A549 (cell line): ENCODE measurements at regions of chr7 and their contacts with region 1.

Region 1: DNA sequence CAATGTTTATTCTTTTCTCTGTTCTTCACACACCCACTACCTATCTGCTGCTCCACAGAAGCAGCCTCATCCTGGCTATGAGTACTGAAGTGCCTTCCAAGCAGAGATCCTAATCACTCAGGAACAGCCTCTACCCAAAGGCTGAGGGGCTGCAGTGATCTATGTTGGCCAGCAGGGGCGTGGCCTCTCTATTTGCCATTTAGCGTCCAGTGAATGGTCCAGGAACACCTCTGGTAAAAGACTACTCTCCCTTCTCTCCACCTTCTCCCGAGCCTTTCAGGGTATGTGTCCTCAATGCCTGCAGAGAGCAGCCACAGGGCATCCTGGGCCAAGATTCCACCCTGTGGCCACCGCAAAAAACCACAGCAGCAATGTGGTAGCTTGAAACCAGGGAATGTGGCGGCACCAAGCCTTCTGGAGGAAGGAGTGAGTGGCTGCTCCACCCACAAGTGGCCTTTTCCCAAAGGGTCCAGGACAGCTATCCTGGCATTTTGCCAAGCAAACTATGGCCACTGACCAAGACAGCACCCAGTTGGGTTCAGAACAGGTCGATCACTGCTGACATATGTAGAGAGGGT is 70.9 kb downstream of the SYPL1 start:
- DNase-seq: peak; percentile 64 to 85
- ATAC-seq: peak; percentile 71 to 84
- H3K4me3 ChIP-seq: no peak overlapping the region
- H3K27ac ChIP-seq: no peak overlapping the region
- H3K4me1 ChIP-seq: 0 out of 3 replicates have a peak, but pooled peaks cover 2% of the 10 kb centered on the region
- CTCF ChIP-seq: peak; percentile 52
- EP300 ChIP-seq: no peak
- POLR2A ChIP-seq: no peak
- RAD21 ChIP-seq: peak in 1 of 2 experiments; percentile 30; a peak in 2 of 5 replicates

Region 2: GRCh38 chr7:105652359-105652993 is 388.8 kb before region 1 on chr7:
- CTCF ChIA-PET with region 1: interaction called, 127 read pairs
- POLR2A ChIA-PET with region 1: no interaction called
- DNase-seq: peak; percentile 71 to 90
- ATAC-seq: peak; percentile 92 to 95
- H3K4me3 ChIP-seq: no peak overlapping the region
- H3K27ac ChIP-seq: peak overlapping the region in 1 of 2 experiments; percentile 39; a peak in 1 of 6 replicates
- H3K4me1 ChIP-seq: peaks cover 41% of the 10 kb centered on the region
- CTCF ChIP-seq: peak; percentile 73
- EP300 ChIP-seq: no peak
- POLR2A ChIP-seq: no peak
- RAD21 ChIP-seq: peak; percentile 80 to 87

Region 3: DNA sequence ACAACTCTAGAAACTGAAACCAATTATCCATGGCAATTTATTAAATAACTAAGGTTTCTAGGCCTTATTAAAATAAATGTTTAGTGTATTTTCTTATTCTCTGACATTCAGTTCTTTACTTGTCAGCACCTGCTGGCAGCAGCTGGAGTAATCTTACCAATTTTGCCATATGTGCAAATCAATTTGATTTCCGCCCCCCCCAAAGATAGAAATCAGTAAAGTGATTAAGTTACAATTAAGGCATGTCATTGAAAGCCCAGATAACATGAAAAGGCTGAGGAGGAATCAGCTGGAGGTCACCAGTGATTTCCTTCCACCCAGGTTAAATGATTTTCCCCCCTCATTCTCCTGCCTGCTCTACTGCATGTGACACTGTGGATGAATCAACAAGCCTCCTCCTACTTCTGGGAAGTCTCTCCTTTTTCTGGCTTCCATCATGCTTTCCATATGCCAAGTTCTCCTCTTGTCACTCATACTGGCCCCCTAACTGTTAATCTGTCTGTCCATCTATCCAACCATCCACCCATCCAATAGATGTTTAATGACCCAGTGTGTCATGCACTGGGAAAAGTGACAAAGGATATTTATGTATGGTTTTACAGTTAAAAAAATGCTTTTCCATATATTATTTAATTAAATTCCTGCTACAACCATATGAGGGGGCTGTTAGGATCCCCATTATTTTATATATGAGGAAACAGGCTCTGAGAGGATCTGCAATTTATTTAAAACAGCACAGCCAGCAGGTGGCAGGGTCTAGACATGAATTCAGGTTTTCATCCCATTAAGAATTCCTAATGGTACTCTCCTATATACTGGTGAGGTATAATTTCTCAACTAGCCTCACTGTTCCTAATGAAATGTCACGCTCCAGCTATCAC is 281.3 kb before region 1 on chr7:
- CTCF ChIA-PET with region 1: interaction called, 251 read pairs
- POLR2A ChIA-PET with region 1: no interaction called
- DNase-seq: peak; percentile 66 to 71
- ATAC-seq: peak; percentile 91 to 93
- H3K4me3 ChIP-seq: no peak overlapping the region
- H3K27ac ChIP-seq: no peak overlapping the region
- H3K4me1 ChIP-seq: no peaks in the 10 kb centered on the region
- CTCF ChIP-seq: peak; percentile 94
- EP300 ChIP-seq: no peak
- POLR2A ChIP-seq: no peak
- RAD21 ChIP-seq: peak; percentile 93 to 94

Region 4: DNA sequence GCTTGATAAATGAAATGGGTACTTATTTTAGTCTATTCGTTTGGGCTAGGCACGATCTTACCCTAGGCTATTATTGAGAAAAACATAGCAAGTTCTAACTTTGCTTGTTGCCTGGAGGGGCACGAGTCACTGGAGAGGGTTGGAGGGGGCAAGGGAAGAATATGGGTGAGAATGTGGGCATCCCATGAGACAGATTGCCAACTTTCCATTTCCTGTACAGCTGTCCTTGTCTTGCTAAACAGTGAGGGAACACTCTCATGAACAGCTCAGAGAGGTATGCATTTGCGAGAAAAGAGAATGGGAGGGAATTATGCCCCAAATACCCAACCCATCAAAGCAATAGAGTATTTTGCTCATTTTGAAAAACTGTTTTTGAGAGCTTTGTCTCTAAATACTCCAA is 69.0 kb before region 1 on chr7:
- CTCF ChIA-PET with region 1: interaction called, 11 read pairs
- POLR2A ChIA-PET with region 1: no interaction called
- DNase-seq: no peak
- ATAC-seq: no peak
- H3K4me3 ChIP-seq: no peak overlapping the region
- H3K27ac ChIP-seq: no peak overlapping the region
- H3K4me1 ChIP-seq: no peaks in the 10 kb centered on the region
- CTCF ChIP-seq: no peak
- EP300 ChIP-seq: no peak
- POLR2A ChIP-seq: no peak
- RAD21 ChIP-seq: no peak

Region 5: DNA sequence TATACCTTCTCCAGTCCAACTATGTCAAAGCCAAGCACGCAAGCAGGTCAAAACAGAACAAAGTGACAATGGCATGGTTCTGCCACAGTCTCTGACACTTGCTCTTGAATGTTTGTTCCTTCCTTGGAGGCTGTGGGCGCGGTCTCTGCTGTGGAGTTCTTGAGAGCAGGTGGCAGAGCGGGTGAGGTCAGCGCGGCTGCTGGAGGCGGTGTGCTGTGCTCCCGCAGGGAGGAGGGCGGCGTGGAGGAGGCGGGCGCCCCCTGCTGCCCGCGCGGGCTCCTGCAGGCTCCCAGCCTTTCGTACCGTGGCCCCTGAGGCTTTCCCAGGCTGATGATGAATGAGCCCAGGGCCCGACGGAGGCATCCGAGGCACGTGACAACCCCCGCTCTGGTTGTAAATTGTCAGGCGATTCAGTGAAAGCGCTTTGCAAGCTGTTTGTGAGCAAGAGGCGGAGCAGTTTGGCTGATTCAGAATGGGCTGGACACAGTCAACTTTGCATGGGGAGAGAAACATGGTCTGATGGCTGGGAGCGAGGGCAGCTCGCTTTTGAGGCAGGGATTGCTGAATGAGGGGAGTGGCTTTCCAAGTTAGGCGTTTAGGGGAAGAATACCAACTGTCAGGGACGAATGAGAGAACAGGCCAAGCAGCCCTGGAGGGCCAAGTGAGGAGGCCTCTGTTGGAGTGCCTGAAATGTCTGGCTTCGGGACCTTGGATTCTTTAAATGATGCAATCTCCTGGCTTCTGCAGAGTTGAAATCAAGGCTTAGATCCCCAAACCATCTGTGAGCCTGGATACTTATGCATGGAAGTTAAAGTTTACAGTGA is 31.6 kb before region 1 on chr7:
- CTCF ChIA-PET with region 1: interaction called, 73 read pairs
- POLR2A ChIA-PET with region 1: no interaction called
- DNase-seq: peak; percentile 76 to 85
- ATAC-seq: peak; percentile 97 to 99
- H3K4me3 ChIP-seq: no peak overlapping the region
- H3K27ac ChIP-seq: no peak overlapping the region
- H3K4me1 ChIP-seq: peaks cover 4% of the 10 kb centered on the region; the same call in 2 of the 3 replicates
- CTCF ChIP-seq: peak; percentile 96
- EP300 ChIP-seq: no peak
- POLR2A ChIP-seq: no peak
- RAD21 ChIP-seq: peak; percentile 80 to 92

Region 6: GRCh38 chr7:106056513-106057203 is 15.4 kb after region 1 on chr7:
- CTCF ChIA-PET with region 1: interaction called, 32 read pairs
- POLR2A ChIA-PET with region 1: no interaction called
- DNase-seq: peak; percentile 77 to 81
- ATAC-seq: peak; percentile 91 to 99
- H3K4me3 ChIP-seq: no peak overlapping the region
- H3K27ac ChIP-seq: no peak overlapping the region
- H3K4me1 ChIP-seq: no peaks in the 10 kb centered on the region
- CTCF ChIP-seq: peak; percentile 85
- EP300 ChIP-seq: no peak
- POLR2A ChIP-seq: no peak
- RAD21 ChIP-seq: peak; percentile 88 to 94

Region 7: DNA sequence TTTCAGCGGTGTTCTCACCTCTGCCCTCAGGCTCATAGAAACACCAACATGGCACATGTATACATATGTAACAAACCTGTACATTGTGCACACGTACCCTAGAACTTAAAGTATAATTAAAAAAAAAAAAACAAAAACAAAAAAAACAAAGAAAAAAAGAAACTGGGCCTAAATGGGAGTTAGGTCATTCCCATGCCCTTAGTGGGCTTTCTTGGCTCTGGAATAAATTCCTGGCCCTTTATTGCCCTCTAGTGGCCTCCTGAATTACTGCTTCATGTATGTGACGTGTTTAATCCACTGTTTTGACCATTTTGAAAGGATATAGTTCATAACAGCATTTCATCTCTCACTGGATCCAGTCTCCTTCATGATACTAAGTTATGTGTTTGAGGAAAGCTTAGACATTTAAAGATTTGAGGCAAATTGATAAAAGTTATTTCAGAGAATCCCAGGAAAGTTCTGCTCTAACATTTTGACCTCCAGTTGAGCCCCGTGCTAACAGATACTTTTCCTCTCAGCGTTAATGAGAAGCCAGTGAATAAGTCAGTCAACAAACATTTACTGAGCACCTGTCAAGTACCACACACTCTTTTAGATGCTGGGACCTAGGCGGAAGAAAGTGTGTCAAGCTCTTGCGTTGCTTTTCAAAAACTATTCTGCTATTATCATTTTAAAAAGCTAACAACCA is 125.6 kb after region 1 on chr7:
- CTCF ChIA-PET with region 1: interaction called, 10 read pairs
- POLR2A ChIA-PET with region 1: no interaction called
- DNase-seq: peak; percentile 68 to 76
- ATAC-seq: peak; percentile 70 to 92; a peak in 4 of 6 replicates
- H3K4me3 ChIP-seq: no peak overlapping the region
- H3K27ac ChIP-seq: no peak overlapping the region
- H3K4me1 ChIP-seq: no peaks in the 10 kb centered on the region
- CTCF ChIP-seq: peak; percentile 87
- EP300 ChIP-seq: no peak
- POLR2A ChIP-seq: no peak
- RAD21 ChIP-seq: peak; percentile 72 to 78